Ovary (tissue), 10 donors: ENCODE measurements at regions of chr11 and their contacts with region 1.

Region 1: GRCh38 chr11:10526974-10527918 is 13.7 kb downstream of the RNF141 start:
- DNase-seq: no peak
- H3K4me3 ChIP-seq: no peak overlapping the region
- H3K27ac ChIP-seq: no peak overlapping the region
- H3K4me1 ChIP-seq: no peaks in the 10 kb centered on the region
- H3K27me3 ChIP-seq: no peaks in the 10 kb centered on the region
- CTCF ChIP-seq: no peak
- EP300 ChIP-seq: no peak
- POLR2A ChIP-seq: no peak

Region 2: DNA sequence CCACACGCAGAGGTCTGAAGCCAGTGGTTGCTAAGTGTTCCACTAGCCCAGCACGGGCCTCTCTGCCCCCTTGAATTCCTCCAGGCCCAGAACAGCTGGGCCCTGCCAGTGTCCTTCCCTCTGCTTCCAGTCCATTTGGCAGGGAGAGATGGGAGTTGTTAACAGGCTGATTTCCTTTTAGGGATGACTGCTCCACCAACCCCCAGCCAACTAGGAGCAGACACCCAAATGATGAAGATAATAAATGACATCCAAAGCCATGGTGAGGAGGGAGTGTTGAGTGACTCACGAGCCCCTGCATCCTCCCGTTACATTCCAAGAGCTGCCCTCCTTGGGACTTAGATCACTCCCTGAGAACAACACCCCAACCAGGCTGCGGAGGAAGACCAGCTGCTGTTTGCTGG is 1870.7 kb after region 1 on chr11:
- intact Hi-C with region 1: loop called in 1 of 4 experiments (anchors 10 kb)
- DNase-seq: peak; percentile 55 to 78 (median 72)
- H3K4me3 ChIP-seq: no peak overlapping the region
- H3K27ac ChIP-seq: peak overlapping the region in 1 of 2 donors; percentile 66
- H3K4me1 ChIP-seq: peaks cover 25% of the 10 kb centered on the region
- H3K27me3 ChIP-seq: no peaks in the 10 kb centered on the region
- CTCF ChIP-seq: no peak
- EP300 ChIP-seq: no peak
- POLR2A ChIP-seq: no peak